ENCODE measurements at regions of chr19 and their contacts with region 1.

Region 1: DNA sequence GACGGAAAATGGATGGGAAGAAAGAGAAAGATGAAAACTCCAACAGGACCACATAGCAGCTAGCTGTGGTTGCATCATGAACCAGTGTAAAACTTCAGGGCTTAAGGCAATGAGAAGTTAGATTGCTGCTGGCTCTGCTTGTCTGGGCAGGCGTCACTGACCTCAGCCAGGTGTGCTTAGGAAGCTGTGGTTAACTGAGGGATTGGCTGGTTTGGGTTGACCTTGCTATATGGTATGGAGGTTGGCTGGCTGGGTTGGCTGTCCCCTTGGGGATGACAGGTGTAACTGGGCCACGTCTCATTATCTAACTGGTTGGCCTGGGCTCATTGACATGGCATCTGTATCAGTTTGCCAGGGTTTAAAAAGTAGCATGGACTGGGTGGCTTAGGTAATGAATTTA is 40.9 kb downstream of the NLRP4 start:
- DNase-seq: no peak
- ATAC-seq: no peak
- H3K4me3 ChIP-seq: no peak overlapping the region
- H3K27ac ChIP-seq: no peak overlapping the region
- H3K4me1 ChIP-seq: no peaks in the 10 kb centered on the region
- H3K27me3 ChIP-seq: peaks cover 77% of the 10 kb centered on the region
- CTCF ChIP-seq: no peak

Region 2: GRCh38 chr19:55820037-55820436 is 57.2 kb before region 1 on chr19:
- CTCF ChIA-PET with region 1: no interaction called
- POLR2A ChIA-PET with region 1: no interaction called
- intact Hi-C with region 1: no loop called
- DNase-seq: no peak
- ATAC-seq: no peak
- H3K4me3 ChIP-seq: no peak overlapping the region
- H3K27ac ChIP-seq: no peak overlapping the region
- H3K4me1 ChIP-seq: no peaks in the 10 kb centered on the region
- H3K27me3 ChIP-seq: peaks cover 50% of the 10 kb centered on the region
- CTCF ChIP-seq: no peak

Region 3: DNA sequence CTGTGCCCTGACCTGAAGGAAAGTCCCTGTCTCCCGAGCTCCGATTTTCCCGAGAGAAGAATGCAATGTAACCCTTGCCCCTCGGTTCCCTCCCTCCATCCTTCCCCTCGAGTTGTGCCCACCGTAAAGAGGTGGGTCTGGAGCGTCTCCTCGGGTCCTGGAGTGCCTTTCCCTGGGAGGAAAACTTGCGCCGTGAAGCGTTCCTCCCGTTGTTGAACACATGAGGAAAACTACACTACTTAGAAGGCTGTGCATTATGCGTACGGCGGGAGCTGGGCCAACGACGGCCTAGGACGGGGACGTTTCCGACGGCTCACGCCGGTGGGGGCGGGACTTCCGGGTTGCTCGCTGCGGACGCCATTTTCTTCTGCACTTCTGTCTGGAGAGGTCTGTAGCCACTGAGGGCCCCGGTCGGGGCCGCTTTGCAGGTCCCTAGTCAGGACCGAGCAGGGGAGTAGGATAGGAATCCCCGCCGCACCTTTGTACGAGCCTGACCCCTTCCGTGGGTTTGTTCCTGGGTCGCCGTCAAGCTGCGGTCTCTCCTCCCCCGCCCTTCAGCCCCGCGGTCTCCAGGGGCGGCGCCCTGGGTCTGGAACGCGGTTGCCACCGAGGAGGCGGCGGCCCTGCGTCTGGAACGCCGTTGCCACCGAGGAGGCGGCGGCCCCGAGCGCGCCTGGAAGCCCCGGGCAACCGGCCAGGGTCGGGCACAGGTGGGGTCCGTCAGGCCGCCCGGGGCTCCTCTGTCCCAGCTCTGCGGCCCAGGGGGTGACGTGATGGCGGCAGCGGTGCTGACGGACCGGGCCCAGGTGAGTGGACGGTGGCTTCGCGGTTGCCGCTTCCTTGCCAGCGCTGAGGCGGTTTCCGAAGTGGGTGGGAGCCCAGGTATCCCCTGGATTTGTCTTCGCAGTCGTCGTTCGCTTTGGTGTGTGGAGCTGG is 1314.2 kb after region 1 on chr19 and contains the start of gene ZNF264:
- CTCF ChIA-PET with region 1: no interaction called
- POLR2A ChIA-PET with region 1: interaction called, 11 read pairs
- intact Hi-C with region 1: no loop called
- DNase-seq: peak; percentile 88
- ATAC-seq: peak; percentile 96
- H3K4me3 ChIP-seq: peak within 1 kb of the TSS; percentile 97
- H3K27ac ChIP-seq: peak within 1 kb of the TSS; percentile 41
- H3K4me1 ChIP-seq: peaks cover 10% of the 10 kb centered on the region
- H3K27me3 ChIP-seq: no peaks in the 10 kb centered on the region
- CTCF ChIP-seq: no peak
- total RNA-seq, gene ZNF264: 44.1 and 53.9 TPM in 2 replicates